ENCODE measurements at regions of chrX and their contacts with region 1.

Region 1: GRCh38 chrX:154980330-154981096 is 42.0 kb downstream of the F8 start:
- DNase-seq: peak; percentile 54
- ATAC-seq: peak; percentile 90
- H3K4me3 ChIP-seq: peak overlapping the region; percentile 54 to 64 (median 55)
- H3K27ac ChIP-seq: no peak overlapping the region
- H3K4me1 ChIP-seq: peaks cover 14% of the 10 kb centered on the region
- H3K27me3 ChIP-seq: no peaks in the 10 kb centered on the region
- CTCF ChIP-seq: peak; percentile 90
- EP300 ChIP-seq: no peak
- POLR2A ChIP-seq: no peak
- RAD21 ChIP-seq: peak; percentile 78

Region 2: GRCh38 chrX:153507484-153508178 is 1472.9 kb before region 1 on chrX:
- CTCF ChIA-PET with region 1: no interaction called
- POLR2A ChIA-PET with region 1: no interaction called
- in situ Hi-C with region 1: no loop called
- intact Hi-C with region 1: no loop called
- DNase-seq: peak; percentile 27
- ATAC-seq: peak; percentile 96
- H3K4me3 ChIP-seq: no peak overlapping the region
- H3K27ac ChIP-seq: no peak overlapping the region
- H3K4me1 ChIP-seq: no peaks in the 10 kb centered on the region
- H3K27me3 ChIP-seq: no peaks in the 10 kb centered on the region
- CTCF ChIP-seq: peak; percentile 94
- EP300 ChIP-seq: no peak
- POLR2A ChIP-seq: no peak
- RAD21 ChIP-seq: peak; percentile 87

Region 3: GRCh38 chrX:154751669-154752271 is 228.7 kb before region 1 on chrX:
- CTCF ChIA-PET with region 1: no interaction called
- POLR2A ChIA-PET with region 1: no interaction called
- in situ Hi-C with region 1: no loop called
- intact Hi-C with region 1: no loop called
- DNase-seq: no peak
- ATAC-seq: no peak
- H3K4me3 ChIP-seq: no peak overlapping the region
- H3K27ac ChIP-seq: no peak overlapping the region
- H3K4me1 ChIP-seq: no peaks in the 10 kb centered on the region
- H3K27me3 ChIP-seq: peaks cover 2 to 24% of the 10 kb centered on the region in 2 experiments; a peak in 4 of 5 replicates
- CTCF ChIP-seq: no peak
- EP300 ChIP-seq: no peak
- POLR2A ChIP-seq: no peak
- RAD21 ChIP-seq: no peak

Region 4: GRCh38 chrX:154902408-154902807 is 78.1 kb before region 1 on chrX:
- CTCF ChIA-PET with region 1: no interaction called
- POLR2A ChIA-PET with region 1: no interaction called
- in situ Hi-C with region 1: no loop called
- intact Hi-C with region 1: no loop called
- DNase-seq: no peak
- ATAC-seq: no peak
- H3K4me3 ChIP-seq: no peak overlapping the region
- H3K27ac ChIP-seq: no peak overlapping the region
- H3K4me1 ChIP-seq: no peaks in the 10 kb centered on the region
- H3K27me3 ChIP-seq: no peaks in the 10 kb centered on the region
- CTCF ChIP-seq: no peak
- EP300 ChIP-seq: no peak
- POLR2A ChIP-seq: no peak
- RAD21 ChIP-seq: no peak

Region 5: GRCh38 chrX:154918060-154918483 is 62.4 kb before region 1 on chrX:
- CTCF ChIA-PET with region 1: no interaction called
- POLR2A ChIA-PET with region 1: no interaction called
- in situ Hi-C with region 1: loop called (anchors 10 kb)
- intact Hi-C with region 1: no loop called
- DNase-seq: peak; percentile 48
- ATAC-seq: peak; percentile 80
- H3K4me3 ChIP-seq: peak overlapping the region in 1 of 3 experiments; percentile 16; a peak in 1 of 6 replicates
- H3K27ac ChIP-seq: no peak overlapping the region
- H3K4me1 ChIP-seq: no peaks in the 10 kb centered on the region
- H3K27me3 ChIP-seq: no peaks in the 10 kb centered on the region
- CTCF ChIP-seq: peak; percentile 77
- EP300 ChIP-seq: no peak
- POLR2A ChIP-seq: no peak
- RAD21 ChIP-seq: peak; percentile 57; the same call in 1 of the 2 replicates

Region 6: DNA sequence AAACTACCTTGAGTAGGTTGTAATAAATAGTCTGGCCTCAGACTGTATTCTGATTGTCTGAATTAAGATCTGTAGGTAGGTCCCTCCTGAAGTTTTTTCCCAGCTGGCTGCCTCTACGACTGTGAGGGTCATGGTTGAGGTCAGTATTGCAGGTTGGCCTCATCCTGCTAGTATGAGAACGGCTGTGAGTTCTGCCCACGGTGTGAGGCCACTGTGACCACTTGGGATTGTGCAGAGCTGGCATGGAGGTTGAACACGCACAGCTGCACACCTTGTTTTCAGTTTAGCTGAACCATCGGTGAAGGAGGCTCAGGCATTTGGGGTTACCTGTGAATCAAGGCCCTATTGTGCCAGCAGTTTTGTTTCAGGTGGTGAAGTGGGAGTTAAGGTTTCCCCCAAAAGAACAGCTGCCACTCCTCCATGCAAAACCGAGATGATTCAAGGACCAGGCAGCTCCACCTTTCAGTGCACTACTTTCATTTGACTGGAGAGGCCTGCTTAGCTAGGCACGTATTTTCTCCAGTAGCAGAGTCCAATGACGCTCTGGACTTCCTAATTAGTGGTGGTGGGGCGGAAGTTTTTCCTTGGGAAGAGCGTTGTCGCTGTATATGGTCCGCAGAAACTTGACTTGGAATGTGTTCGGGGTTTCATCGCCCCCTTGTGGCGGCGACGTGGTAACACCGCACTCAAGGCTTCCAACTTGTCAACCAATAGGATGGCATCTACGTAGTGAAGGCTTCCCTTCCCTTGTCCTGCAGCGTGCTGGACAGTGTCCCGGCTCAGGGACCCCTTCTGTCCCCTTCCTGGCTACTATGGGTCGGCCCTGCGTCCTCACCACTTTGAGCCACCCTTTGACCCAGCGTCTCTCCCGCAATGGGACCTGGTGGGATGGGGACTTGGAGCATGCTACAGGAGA is 76.6 kb after region 1 on chrX:
- CTCF ChIA-PET with region 1: interaction called, 21 read pairs
- POLR2A ChIA-PET with region 1: no interaction called
- in situ Hi-C with region 1: loop called (anchors 10 kb)
- intact Hi-C with region 1: loop called (anchors 1 kb)
- DNase-seq: peak; percentile 43
- ATAC-seq: peak; percentile 96
- H3K4me3 ChIP-seq: peak overlapping the region in 1 of 3 experiments; percentile 41; a peak in 1 of 6 replicates
- H3K27ac ChIP-seq: no peak overlapping the region
- H3K4me1 ChIP-seq: peaks cover 12% of the 10 kb centered on the region
- H3K27me3 ChIP-seq: no peaks in the 10 kb centered on the region
- CTCF ChIP-seq: peak; percentile 85
- EP300 ChIP-seq: no peak
- POLR2A ChIP-seq: no peak
- RAD21 ChIP-seq: peak; percentile 58; the same call in 1 of the 2 replicates

Region 7: GRCh38 chrX:155070975-155071693 is 90.6 kb after region 1 on chrX and contains the starts of genes BRCC3, CMC4 and MTCP1:
- CTCF ChIA-PET with region 1: no interaction called
- POLR2A ChIA-PET with region 1: no interaction called
- in situ Hi-C with region 1: no loop called
- intact Hi-C with region 1: no loop called
- DNase-seq: peak; percentile 65
- ATAC-seq: peak; percentile 97
- H3K4me3 ChIP-seq: peak within 1 kb of the TSS; percentile 72 to 86 (median 79)
- H3K27ac ChIP-seq: peak within 1 kb of the TSS; percentile 77
- H3K4me1 ChIP-seq: peaks cover 45% of the 10 kb centered on the region
- H3K27me3 ChIP-seq: no peaks in the 10 kb centered on the region
- CTCF ChIP-seq: no peak
- EP300 ChIP-seq: no peak
- POLR2A ChIP-seq: peak; percentile 80 to 93
- RAD21 ChIP-seq: no peak
- total RNA-seq, gene BRCC3: 24.3 and 44.2 TPM in 2 replicates
- total RNA-seq, gene CMC4: 5.2 and 5.6 TPM in 2 replicates
- total RNA-seq, gene MTCP1: 13.6 and 18.9 TPM in 2 replicates

Region 8: DNA sequence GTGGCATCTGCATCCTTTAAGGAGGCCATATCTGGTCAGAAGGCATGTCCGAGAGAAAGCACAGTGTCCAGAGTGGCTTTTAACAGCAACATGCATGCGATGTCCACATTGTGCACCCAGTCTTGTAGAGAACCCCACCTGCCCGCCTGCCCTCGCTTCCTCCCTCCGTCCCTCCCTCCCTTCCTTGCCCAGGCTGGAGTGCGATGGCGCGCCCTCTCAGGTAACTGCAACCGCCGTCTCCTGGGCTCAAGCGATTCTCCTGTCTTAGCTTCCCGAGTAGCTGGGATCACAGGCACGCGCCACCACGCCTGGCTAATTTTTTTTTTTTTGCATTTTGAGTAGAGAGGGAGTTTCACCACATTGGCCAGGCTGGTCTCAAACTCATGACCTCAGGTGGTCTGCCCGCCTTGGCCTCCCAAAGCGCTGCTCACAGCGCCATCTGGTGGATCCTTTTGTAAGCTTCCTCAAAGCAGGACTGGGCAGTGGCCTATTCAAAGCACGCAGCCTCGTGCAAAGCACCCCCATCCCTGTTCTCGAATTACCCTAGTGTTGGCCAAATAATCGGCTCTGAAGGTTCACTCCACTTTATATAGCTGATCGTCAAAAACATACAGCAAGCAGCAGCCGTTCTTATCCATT is 105.8 kb after region 1 on chrX:
- CTCF ChIA-PET with region 1: interaction called, 5 read pairs
- POLR2A ChIA-PET with region 1: no interaction called
- in situ Hi-C with region 1: loop called (anchors 10 kb)
- intact Hi-C with region 1: no loop called
- DNase-seq: peak; percentile 21
- ATAC-seq: peak; percentile 76
- H3K4me3 ChIP-seq: no peak overlapping the region
- H3K27ac ChIP-seq: no peak overlapping the region
- H3K4me1 ChIP-seq: no peaks in the 10 kb centered on the region
- H3K27me3 ChIP-seq: no peaks in the 10 kb centered on the region
- CTCF ChIP-seq: peak; percentile 65
- EP300 ChIP-seq: no peak
- POLR2A ChIP-seq: no peak
- RAD21 ChIP-seq: no peak

Region 9: DNA sequence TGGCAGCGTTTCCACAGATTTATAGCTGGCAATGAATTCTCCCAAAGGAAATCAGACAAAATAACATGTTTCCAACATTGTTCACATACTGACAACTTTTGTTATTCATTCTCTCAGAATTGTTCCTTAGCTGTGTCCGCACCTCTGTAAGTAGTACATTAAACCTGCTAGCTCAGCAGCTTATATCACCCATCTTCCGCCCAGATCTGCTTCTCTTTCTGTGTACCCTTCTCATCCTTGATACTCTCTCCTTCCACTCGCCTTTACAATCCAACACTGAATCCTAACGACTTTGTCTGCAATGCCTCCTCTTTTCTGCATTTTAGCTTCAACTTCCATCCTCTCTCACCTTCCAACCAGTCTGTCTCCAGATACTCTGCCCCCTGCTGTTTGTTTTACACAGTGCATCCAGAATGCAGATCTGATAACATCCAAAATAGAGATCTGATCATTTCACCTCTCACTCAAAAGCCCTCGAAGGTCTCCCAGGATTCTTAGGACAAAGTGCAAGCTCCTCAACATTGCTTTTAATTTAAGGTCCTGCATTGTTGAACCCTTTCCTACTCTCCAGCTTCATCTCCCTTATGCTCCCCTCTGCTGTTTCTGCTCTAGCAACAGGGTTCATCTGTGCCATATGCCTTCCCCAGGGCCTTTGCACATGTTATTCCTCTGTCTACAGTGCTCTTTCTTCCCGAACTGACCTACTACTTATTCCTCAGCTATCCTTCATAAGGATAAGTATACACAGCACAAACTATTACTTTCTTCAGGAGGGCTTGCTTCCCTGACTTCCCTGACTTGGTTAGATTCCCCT is 168.4 kb after region 1 on chrX:
- CTCF ChIA-PET with region 1: no interaction called
- POLR2A ChIA-PET with region 1: no interaction called
- in situ Hi-C with region 1: no loop called
- intact Hi-C with region 1: loop called (anchors 2 kb)
- DNase-seq: peak; percentile 15
- ATAC-seq: peak; percentile 47; the same call in 2 of the 3 replicates
- H3K4me3 ChIP-seq: no peak overlapping the region
- H3K27ac ChIP-seq: no peak overlapping the region
- H3K4me1 ChIP-seq: peaks cover 7% of the 10 kb centered on the region; the same call in 1 of the 2 replicates
- H3K27me3 ChIP-seq: no peaks in the 10 kb centered on the region
- CTCF ChIP-seq: peak; percentile 51
- EP300 ChIP-seq: no peak
- POLR2A ChIP-seq: no peak
- RAD21 ChIP-seq: no peak

Measured in HepG2 (cell line).